CD8-positive, alpha-beta T cell (primary cell): ENCODE measurements at regions of chr3 and their contacts with region 1.

Region 1: GRCh38 chr3:180802837-180803236 is 109.6 kb upstream of the FXR1 start:
- DNase-seq: peak in 1 of 9 experiments; percentile 2
- ATAC-seq: no peak
- H3K4me3 ChIP-seq: no peak overlapping the region
- H3K4me3 Mint-ChIP-seq: no peak overlapping the region
- H3K27ac ChIP-seq: no peak overlapping the region
- H3K27ac Mint-ChIP-seq: no peak overlapping the region
- H3K4me1 ChIP-seq: no peaks in the 10 kb centered on the region
- H3K4me1 Mint-ChIP-seq: no peaks in the 10 kb centered on the region
- H3K27me3 ChIP-seq: no peaks in the 10 kb centered on the region
- H3K27me3 Mint-ChIP-seq: peaks cover 2% of the 10 kb centered on the region
- CTCF ChIP-seq: no peak

Region 2: DNA sequence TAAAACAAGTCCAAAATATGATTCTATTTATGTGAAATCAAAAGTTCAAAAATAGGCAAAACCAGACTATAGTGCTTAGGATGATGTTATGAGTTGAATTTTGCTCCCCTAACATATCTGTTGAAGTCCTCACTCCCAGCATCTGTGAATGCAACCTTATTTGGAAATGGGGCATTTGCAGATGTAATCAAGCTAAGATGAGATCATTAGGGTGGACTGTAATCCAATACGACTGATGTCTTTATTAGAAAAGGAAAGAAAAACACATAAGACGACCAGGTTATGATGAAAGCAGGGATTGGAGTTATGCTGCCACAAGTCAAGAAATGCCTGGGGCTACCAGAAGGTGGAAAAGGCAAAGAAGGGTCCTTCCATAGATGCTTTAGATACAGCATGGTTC is 13.1 kb before region 1 on chr3:
- CTCF ChIA-PET with region 1: no interaction called
- POLR2A ChIA-PET with region 1: no interaction called
- intact Hi-C with region 1: no loop called
- DNase-seq: no peak
- ATAC-seq: no peak
- H3K4me3 ChIP-seq: no peak overlapping the region
- H3K4me3 Mint-ChIP-seq: no peak overlapping the region
- H3K27ac ChIP-seq: no peak overlapping the region
- H3K27ac Mint-ChIP-seq: no peak overlapping the region
- H3K4me1 ChIP-seq: no peaks in the 10 kb centered on the region
- H3K4me1 Mint-ChIP-seq: no peaks in the 10 kb centered on the region
- H3K27me3 ChIP-seq: no peaks in the 10 kb centered on the region
- H3K27me3 Mint-ChIP-seq: no peaks in the 10 kb centered on the region
- CTCF ChIP-seq: no peak

Region 3: DNA sequence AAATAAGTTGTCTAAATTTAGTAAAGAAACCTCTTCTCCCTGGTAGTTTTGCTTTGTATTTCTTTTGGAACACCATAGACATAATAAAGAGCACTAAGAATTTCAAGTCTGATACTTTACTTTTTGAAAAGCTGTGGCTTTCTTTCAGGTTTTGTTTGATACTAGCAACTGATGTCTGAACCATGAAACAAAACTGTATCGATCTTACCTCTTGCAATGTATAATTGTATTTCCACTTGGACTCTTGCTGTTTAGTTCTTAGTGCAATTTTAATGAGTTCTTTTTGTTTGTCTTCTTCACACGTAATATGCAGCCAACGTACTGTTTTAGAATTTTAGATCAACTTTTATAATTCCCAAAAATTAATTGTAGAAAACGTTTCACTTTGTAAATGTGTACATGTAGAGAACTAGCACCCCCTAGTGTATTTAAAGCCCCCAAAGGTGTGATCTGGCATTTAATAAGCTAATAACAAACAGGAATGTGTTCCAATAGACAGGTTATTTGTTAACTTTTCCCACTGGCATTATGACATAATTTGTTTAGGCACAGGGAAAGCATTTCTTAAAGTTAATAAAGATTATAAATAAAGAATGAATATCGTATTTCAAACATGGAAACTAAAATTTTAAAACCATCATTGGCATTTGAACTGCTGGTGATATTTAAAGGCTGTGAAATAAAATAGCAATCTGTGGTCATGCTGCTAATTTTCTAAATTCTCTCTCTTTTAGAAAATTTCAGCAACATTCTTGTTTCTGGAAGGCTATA is 475.8 kb after region 1 on chr3:
- CTCF ChIA-PET with region 1: no interaction called
- POLR2A ChIA-PET with region 1: no interaction called
- intact Hi-C with region 1: loop called in 1 of 2 experiments (anchors 5 kb)
- DNase-seq: peak in 2 of 9 experiments; percentile 4 to 12
- ATAC-seq: no peak
- H3K4me3 ChIP-seq: no peak overlapping the region
- H3K4me3 Mint-ChIP-seq: no peak overlapping the region
- H3K27ac ChIP-seq: no peak overlapping the region
- H3K27ac Mint-ChIP-seq: no peak overlapping the region
- H3K4me1 ChIP-seq: no peaks in the 10 kb centered on the region
- H3K4me1 Mint-ChIP-seq: no peaks in the 10 kb centered on the region
- H3K27me3 ChIP-seq: no peaks in the 10 kb centered on the region
- H3K27me3 Mint-ChIP-seq: peaks cover 7% of the 10 kb centered on the region
- CTCF ChIP-seq: peak; percentile 42